ENCODE measurements at regions of chr14 and their contacts with region 1.

Region 1: GRCh38 chr14:65958664-65959562 is 527.3 kb upstream of the CCDC196 start:
- DNase-seq: no peak
- H3K4me3 Mint-ChIP-seq: no peak overlapping the region
- H3K27ac Mint-ChIP-seq: no peak overlapping the region
- H3K4me1 Mint-ChIP-seq: peaks cover 16% of the 10 kb centered on the region
- H3K27me3 Mint-ChIP-seq: peaks cover 1% of the 10 kb centered on the region

Region 2: GRCh38 chr14:65164068-65164824 is 794.7 kb before region 1 on chr14:
- CTCF ChIA-PET with region 1: interaction called, 55 read pairs
- POLR2A ChIA-PET with region 1: no interaction called
- intact Hi-C with region 1: loop called (anchors 2 kb)
- DNase-seq: peak; percentile 36
- H3K4me3 Mint-ChIP-seq: no peak overlapping the region
- H3K27ac Mint-ChIP-seq: no peak overlapping the region
- H3K4me1 Mint-ChIP-seq: peaks cover 5% of the 10 kb centered on the region
- H3K27me3 Mint-ChIP-seq: no peaks in the 10 kb centered on the region

Region 3: GRCh38 chr14:65847075-65847847 is 111.7 kb before region 1 on chr14:
- CTCF ChIA-PET with region 1: interaction called, 20 read pairs
- POLR2A ChIA-PET with region 1: no interaction called
- intact Hi-C with region 1: no loop called
- DNase-seq: peak; percentile 86
- H3K4me3 Mint-ChIP-seq: peak overlapping the region; percentile 22
- H3K27ac Mint-ChIP-seq: peak overlapping the region; percentile 79
- H3K4me1 Mint-ChIP-seq: peaks cover 66% of the 10 kb centered on the region
- H3K27me3 Mint-ChIP-seq: no peaks in the 10 kb centered on the region

Region 4: DNA sequence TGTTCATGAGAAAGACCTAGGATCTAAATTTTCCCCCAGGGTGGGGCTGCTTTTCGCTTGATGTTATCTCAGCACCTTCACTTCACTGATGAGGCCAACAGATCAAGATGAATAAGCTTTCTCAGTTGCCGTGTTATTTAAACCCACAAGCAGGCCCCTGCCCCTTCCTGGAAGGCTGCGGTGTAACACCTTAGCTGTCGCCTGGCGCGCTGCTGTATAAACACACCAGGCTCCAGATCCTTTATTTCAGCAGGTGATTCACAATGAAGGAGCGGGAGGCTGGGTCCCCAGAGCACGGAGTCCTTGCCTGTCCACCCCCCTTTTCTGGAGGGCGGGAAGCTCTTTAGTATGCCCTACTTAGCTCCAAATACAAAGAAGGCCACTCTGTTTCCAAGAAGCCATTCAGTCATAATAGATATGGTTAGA is 31.0 kb before region 1 on chr14:
- CTCF ChIA-PET with region 1: interaction called, 28 read pairs
- POLR2A ChIA-PET with region 1: no interaction called
- intact Hi-C with region 1: no loop called
- DNase-seq: peak; percentile 92
- H3K4me3 Mint-ChIP-seq: peak overlapping the region; percentile 18
- H3K27ac Mint-ChIP-seq: peak overlapping the region; percentile 43
- H3K4me1 Mint-ChIP-seq: peaks cover 51% of the 10 kb centered on the region
- H3K27me3 Mint-ChIP-seq: peaks cover 2% of the 10 kb centered on the region

Region 5: GRCh38 chr14:66070509-66071319 is 111.8 kb after region 1 on chr14:
- CTCF ChIA-PET with region 1: interaction called, 57 read pairs
- POLR2A ChIA-PET with region 1: no interaction called
- intact Hi-C with region 1: loop called (anchors 1 kb)
- DNase-seq: peak; percentile 72
- H3K4me3 Mint-ChIP-seq: no peak overlapping the region
- H3K27ac Mint-ChIP-seq: no peak overlapping the region
- H3K4me1 Mint-ChIP-seq: no peaks in the 10 kb centered on the region
- H3K27me3 Mint-ChIP-seq: peaks cover 1% of the 10 kb centered on the region

Measured in activated CD4-positive, alpha-beta memory T cell treated with anti-CD3 and anti-CD28 coated beads for 36 hours (primary cell).